ENCODE measurements at regions of chr19 and their contacts with region 1.

Region 1: DNA sequence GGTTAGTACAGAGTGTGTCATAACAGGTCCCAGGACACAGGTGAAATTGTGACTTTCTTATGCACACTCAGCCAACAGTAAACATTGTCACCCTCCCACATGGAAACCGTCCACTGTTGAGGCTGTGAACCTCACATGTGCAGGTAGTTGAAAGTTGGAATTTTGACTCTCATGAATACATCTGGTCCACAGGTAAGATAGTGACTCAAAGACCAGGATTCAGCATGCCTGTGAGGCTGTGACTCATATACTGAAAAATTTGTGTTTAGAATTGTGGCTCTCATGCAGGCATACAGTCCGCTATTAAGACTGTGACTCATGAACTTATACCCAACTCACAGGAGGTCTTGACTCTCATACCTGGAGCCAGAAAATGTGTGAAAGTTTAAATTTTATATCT is 67.8 kb downstream of the ZNF728 start:
- DNase-seq: no peak
- ATAC-seq: no peak
- H3K4me3 ChIP-seq: no peak overlapping the region
- H3K27ac ChIP-seq: no peak overlapping the region
- H3K4me1 ChIP-seq: no peaks in the 10 kb centered on the region
- H3K27me3 ChIP-seq: no peaks in the 10 kb centered on the region
- CTCF ChIP-seq: no peak
- POLR2A ChIP-seq: no peak

Region 2: GRCh38 chr19:21940684-21941083 is 994.5 kb before region 1 on chr19:
- in situ Hi-C with region 1: loop called (anchors 5 kb)
- intact Hi-C with region 1: no loop called
- DNase-seq: no peak
- ATAC-seq: no peak
- H3K4me3 ChIP-seq: no peak overlapping the region
- H3K27ac ChIP-seq: no peak overlapping the region
- H3K4me1 ChIP-seq: no peaks in the 10 kb centered on the region
- H3K27me3 ChIP-seq: no peaks in the 10 kb centered on the region
- CTCF ChIP-seq: no peak
- POLR2A ChIP-seq: no peak

Region 3: DNA sequence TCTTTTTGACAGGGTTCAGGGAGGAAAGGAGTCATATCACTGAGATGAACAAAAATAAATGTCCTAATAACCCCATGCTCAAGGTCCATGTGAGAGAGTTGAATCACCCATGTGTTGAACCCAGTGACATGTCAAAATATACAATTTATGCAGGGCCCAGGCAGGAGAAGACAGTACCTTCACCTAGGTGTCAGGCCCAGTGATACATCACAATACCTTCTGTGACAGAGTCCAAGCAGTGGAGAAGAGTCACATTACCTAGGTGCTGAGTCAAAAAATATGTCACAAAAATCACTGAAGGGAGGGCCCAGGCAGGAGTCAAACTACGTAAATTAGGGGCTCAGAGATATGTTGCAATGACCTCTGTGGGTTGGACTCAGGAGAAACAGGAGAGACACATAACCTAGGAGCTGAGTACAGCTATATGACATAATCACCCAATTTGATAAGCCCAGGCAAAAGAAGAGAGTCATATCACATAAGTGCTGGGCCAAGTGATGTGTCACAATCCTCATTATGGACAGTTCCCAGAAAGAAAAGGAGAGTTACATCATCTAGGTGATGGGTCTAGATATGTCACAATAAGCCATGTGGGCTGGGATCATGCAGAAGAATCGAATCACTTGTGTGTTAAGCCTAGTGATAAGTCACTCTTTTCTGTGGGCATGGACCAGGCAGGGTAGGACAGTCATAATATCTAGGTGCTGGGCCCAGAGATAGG is 328.9 kb after region 1 on chr19:
- in situ Hi-C with region 1: no loop called
- intact Hi-C with region 1: no loop called
- DNase-seq: no peak
- ATAC-seq: peak; percentile 42 to 70
- H3K4me3 ChIP-seq: no peak overlapping the region
- H3K27ac ChIP-seq: peak overlapping the region in 1 of 4 donors; percentile 5
- H3K4me1 ChIP-seq: no peaks in the 10 kb centered on the region
- H3K27me3 ChIP-seq: no peaks in the 10 kb centered on the region
- CTCF ChIP-seq: no peak
- POLR2A ChIP-seq: no peak